ENCODE measurements at regions of chr7 and their contacts with region 1.

Region 1: DNA sequence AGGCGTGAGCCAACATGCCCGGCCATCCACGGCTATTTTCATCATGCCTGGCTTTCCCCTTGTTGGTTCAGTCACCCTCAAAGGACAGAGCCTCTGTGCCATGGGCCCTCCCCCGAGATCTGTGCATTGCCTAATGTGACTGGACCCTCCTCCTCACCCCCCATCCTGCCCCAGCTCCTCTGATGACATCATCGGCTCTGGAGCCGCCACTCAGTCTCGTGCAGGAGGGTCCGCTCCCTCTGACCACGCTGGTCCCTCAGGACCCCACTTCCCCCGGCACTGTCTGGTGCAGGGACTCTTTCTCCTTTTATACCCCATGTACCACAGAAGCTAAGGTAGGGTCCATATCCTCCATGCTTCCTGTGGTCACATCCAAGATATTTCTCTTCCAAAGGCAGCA is 33.2 kb upstream of the BAIAP2L1 start:
- DNase-seq: no peak
- H3K4me3 ChIP-seq: no peak overlapping the region
- H3K27ac ChIP-seq: no peak overlapping the region
- H3K4me1 ChIP-seq: no peaks in the 10 kb centered on the region
- H3K27me3 ChIP-seq: no peaks in the 10 kb centered on the region
- CTCF ChIP-seq: no peak

Region 2: DNA sequence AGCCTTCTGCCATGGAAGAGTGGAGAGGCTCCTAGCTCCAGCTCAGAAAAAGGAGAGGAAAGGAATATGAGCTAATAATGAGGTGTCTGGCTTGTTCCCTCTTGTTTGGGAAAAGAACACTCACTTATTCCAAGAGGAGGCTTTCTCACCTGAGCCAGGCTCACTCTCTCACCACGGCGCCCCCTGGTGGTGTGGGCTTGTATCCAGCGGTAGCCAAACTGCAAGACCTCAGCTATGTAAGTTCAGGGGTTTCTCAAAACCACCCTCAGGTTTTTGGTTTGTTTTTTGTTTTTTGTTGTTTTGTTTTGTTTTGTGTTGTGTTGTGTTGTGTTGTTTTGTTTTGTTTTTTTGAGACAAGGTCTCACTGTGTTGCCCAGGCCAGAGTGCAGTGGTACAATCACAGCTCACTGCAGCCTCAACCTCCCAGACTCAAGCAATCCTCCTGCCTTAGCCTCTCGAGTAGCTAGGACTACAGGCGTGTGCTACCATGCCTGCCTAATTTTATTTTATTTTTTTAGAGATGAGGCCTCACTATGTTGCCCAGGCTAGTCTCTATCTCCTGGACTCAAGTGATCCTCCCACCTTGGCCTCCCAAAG is 311.7 kb after region 1 on chr7:
- intact Hi-C with region 1: loop called (anchors 10 kb)
- DNase-seq: peak; percentile 65 to 79 (median 72)
- H3K4me3 ChIP-seq: no peak overlapping the region
- H3K27ac ChIP-seq: no peak overlapping the region
- H3K4me1 ChIP-seq: no peaks in the 10 kb centered on the region
- H3K27me3 ChIP-seq: no peaks in the 10 kb centered on the region
- CTCF ChIP-seq: peak; percentile 57

Region 3: GRCh38 chr7:98841179-98841997 is 407.3 kb after region 1 on chr7:
- intact Hi-C with region 1: loop called (anchors 5 kb)
- DNase-seq: peak; percentile 47 to 82 (median 66)
- H3K4me3 ChIP-seq: no peak overlapping the region
- H3K27ac ChIP-seq: no peak overlapping the region
- H3K4me1 ChIP-seq: no peaks in the 10 kb centered on the region
- H3K27me3 ChIP-seq: no peaks in the 10 kb centered on the region
- CTCF ChIP-seq: peak; percentile 95